ENCODE measurements at regions of chr15 and their contacts with region 1.

Region 1: GRCh38 chr15:75790631-75791336 is 52.5 kb upstream of the UBE2Q2 start:
- DNase-seq: no peak
- ATAC-seq: no peak
- H3K4me3 ChIP-seq: no peak overlapping the region
- H3K27ac ChIP-seq: no peak overlapping the region
- H3K4me1 ChIP-seq: no peaks in the 10 kb centered on the region
- H3K27me3 ChIP-seq: peaks cover 0 to 6% (median 0%) of the 10 kb centered on the region in 4 donors
- CTCF ChIP-seq: no peak

Region 2: GRCh38 chr15:75723847-75724660 is 66.7 kb before region 1 on chr15:
- intact Hi-C with region 1: loop called in 1 of 3 experiments (anchors 10 kb)
- DNase-seq: peak; percentile 71 to 91 (median 82)
- ATAC-seq: peak; percentile 87 to 93 (median 90)
- H3K4me3 ChIP-seq: no peak overlapping the region
- H3K27ac ChIP-seq: no peak overlapping the region
- H3K4me1 ChIP-seq: no peaks in the 10 kb centered on the region
- H3K27me3 ChIP-seq: no peaks in the 10 kb centered on the region
- CTCF ChIP-seq: no peak

Region 3: DNA sequence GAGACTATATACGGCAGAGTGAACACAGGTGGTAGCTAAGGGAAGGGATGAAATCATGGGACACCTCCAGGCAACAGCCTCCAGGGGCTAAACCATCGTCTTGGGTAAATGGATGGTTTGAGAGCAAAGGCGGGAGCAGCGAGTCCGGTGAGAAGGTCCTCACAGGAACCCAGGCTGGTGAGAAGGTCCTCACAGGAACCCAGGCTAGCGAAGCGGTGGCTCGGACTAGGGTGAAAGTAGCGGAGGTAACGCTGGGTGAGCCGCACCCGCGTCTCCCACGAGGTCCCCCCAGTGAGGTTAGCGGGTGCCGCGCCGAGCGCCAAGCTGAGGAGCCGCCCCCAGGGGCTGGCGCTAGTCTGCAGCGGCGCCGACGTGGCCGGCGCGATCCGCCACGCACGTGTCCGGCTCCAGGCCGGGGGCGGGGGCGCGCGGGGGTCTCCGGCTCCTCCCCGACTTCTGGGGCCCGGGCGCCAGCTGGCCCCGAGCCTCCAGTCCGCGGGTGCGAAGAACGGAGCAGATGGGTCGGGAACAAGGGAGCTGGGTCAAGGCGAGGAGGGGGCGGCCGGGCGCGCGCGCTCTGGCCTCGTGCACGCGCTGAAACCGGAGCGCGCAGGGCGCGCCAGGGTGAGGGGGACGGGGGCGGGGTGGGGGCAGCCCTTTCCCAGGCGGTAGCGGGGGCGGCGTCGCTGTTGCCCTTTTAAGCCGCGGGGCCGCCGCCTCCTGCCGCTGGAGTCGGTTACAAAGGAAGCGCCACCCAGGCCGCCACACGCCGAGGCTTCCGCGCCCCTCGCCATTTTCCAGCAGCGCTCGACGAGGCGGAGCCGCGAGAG is 52.2 kb after region 1 on chr15 and contains the start of gene UBE2Q2:
- intact Hi-C with region 1: no loop called
- DNase-seq: peak in 5 of 6 donors; percentile 48 to 85 (median 68)
- ATAC-seq: peak; percentile 65 to 75 (median 71)
- H3K4me3 ChIP-seq: peak within 1 kb of the TSS; percentile 85 to 97 (median 92)
- H3K27ac ChIP-seq: peak within 1 kb of the TSS; percentile 69 to 77 (median 72)
- H3K4me1 ChIP-seq: peaks cover 0 to 26% (median 4%) of the 10 kb centered on the region in 3 donors
- H3K27me3 ChIP-seq: no peaks in the 10 kb centered on the region
- CTCF ChIP-seq: no peak
- total RNA-seq, gene UBE2Q2: 8.7 to 19.4 (median 10.6) TPM